Naive thymus-derived CD4-positive, alpha-beta T cell (primary cell): ENCODE measurements at regions of chr6 and their contacts with region 1.

Region 1: DNA sequence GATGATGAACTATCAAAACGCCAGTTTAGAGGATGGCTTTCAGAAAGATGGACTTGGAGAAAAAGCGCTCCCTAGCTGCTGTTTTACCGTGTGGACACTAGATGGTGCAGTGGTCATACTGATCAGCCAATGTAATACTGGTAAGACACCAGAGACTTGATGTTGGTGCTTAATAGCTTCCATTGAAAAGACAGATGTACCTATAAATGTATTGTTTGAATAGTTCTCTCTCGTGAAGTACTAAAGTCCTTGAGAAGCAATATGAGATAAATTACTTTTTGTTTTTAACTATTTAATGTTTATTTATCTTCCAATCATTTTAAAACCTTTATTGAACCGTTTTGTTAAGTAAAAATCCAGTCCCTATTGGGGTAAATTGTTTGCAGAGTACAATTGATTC is 63.9 kb upstream of the FUCA2 start:
- DNase-seq: peak in 8 of 9 donors; percentile 34 to 79 (median 67)
- ATAC-seq: peak; percentile 99
- H3K4me3 ChIP-seq: no peak overlapping the region
- H3K4me3 Mint-ChIP-seq: no peak overlapping the region
- H3K27ac ChIP-seq: no peak overlapping the region
- H3K27ac Mint-ChIP-seq: peak overlapping the region in 1 of 9 donors; percentile 15
- H3K4me1 ChIP-seq: no peaks in the 10 kb centered on the region
- H3K4me1 Mint-ChIP-seq: peaks cover 0 to 9% (median 0%) of the 10 kb centered on the region in 7 donors
- H3K27me3 ChIP-seq: no peaks in the 10 kb centered on the region
- H3K27me3 Mint-ChIP-seq: no peaks in the 10 kb centered on the region

Region 2: GRCh38 chr6:143510991-143511891 is 64.2 kb before region 1 on chr6 and contains the start of gene FUCA2:
- CTCF ChIA-PET with region 1: interaction called, 6 read pairs
- POLR2A ChIA-PET with region 1: no interaction called
- intact Hi-C with region 1: loop called in 1 of 2 experiments (anchors 1 kb)
- DNase-seq: peak; percentile 35 to 72 (median 63)
- ATAC-seq: peak; percentile 82
- H3K4me3 ChIP-seq: peak within 1 kb of the TSS; percentile 74
- H3K4me3 Mint-ChIP-seq: peak within 1 kb of the TSS; percentile 87 to 97 (median 92)
- H3K27ac ChIP-seq: peak within 1 kb of the TSS; percentile 69
- H3K27ac Mint-ChIP-seq: peak within 1 kb of the TSS; percentile 79 to 97 (median 89)
- H3K4me1 ChIP-seq: peaks cover 0 to 4% of the 10 kb centered on the region in 2 donors
- H3K4me1 Mint-ChIP-seq: peaks cover 14 to 43% (median 19%) of the 10 kb centered on the region in 7 donors
- H3K27me3 ChIP-seq: no peaks in the 10 kb centered on the region
- H3K27me3 Mint-ChIP-seq: no peaks in the 10 kb centered on the region
- total RNA-seq, gene FUCA2: 5.3 to 14.9 (median 6.7) TPM

Region 3: GRCh38 chr6:143734641-143735063 is 159.2 kb after region 1 on chr6:
- CTCF ChIA-PET with region 1: no interaction called
- POLR2A ChIA-PET with region 1: no interaction called
- intact Hi-C with region 1: loop called in 1 of 2 experiments (anchors 5 kb)
- DNase-seq: no peak
- ATAC-seq: no peak
- H3K4me3 ChIP-seq: no peak overlapping the region
- H3K4me3 Mint-ChIP-seq: no peak overlapping the region
- H3K27ac ChIP-seq: no peak overlapping the region
- H3K27ac Mint-ChIP-seq: no peak overlapping the region
- H3K4me1 ChIP-seq: peaks cover 0 to 8% of the 10 kb centered on the region in 2 donors
- H3K4me1 Mint-ChIP-seq: peaks cover 16 to 44% (median 30%) of the 10 kb centered on the region in 7 donors
- H3K27me3 ChIP-seq: no peaks in the 10 kb centered on the region
- H3K27me3 Mint-ChIP-seq: no peaks in the 10 kb centered on the region

Region 4: DNA sequence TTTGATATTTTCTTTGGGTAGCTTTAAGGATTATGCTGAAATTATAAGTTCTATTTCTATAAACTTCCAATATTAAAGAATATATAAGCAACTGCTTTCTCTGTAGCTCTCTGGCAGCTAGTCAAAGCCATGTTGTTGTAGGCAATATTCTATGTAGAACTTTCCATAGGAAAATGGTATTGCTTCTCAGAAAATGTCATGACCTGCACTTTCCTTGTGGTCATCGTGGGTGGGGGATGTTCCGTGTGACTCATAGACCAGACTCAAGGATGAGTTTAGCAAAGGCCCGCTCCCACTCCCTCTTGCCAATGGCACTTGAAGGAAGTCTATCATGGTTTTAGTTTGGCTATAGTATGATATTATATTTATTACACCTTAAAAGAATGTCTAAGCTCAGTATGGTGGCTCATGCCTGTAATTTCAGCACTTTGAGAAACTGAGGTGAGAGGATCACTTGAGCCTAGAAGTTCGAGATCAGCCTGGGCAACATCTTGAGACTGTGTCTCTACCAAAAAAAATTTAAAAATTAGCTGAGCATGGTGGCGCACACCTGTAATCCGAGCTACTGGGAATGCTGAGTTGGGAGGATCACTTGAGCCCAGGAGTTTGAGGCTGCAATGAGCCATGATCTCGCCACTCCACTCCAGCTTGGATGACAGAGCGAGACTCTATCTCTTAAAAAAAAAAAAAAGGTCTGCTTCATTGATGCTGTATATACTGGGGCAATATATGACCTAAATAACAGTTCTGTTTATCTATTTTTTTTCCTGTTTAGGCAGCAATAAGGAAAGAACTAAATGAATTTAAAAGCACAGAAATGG is 231.1 kb after region 1 on chr6:
- CTCF ChIA-PET with region 1: no interaction called
- POLR2A ChIA-PET with region 1: no interaction called
- intact Hi-C with region 1: no loop called
- DNase-seq: peak in 1 of 9 donors; percentile 84
- ATAC-seq: peak; percentile 48
- H3K4me3 ChIP-seq: no peak overlapping the region
- H3K4me3 Mint-ChIP-seq: peak overlapping the region in 1 of 10 donors; percentile 25
- H3K27ac ChIP-seq: no peak overlapping the region
- H3K27ac Mint-ChIP-seq: peak overlapping the region in 1 of 9 donors; percentile 62
- H3K4me1 ChIP-seq: no peaks in the 10 kb centered on the region
- H3K4me1 Mint-ChIP-seq: peaks cover 0 to 33% (median 4%) of the 10 kb centered on the region in 7 donors
- H3K27me3 ChIP-seq: no peaks in the 10 kb centered on the region
- H3K27me3 Mint-ChIP-seq: no peaks in the 10 kb centered on the region

Region 5: DNA sequence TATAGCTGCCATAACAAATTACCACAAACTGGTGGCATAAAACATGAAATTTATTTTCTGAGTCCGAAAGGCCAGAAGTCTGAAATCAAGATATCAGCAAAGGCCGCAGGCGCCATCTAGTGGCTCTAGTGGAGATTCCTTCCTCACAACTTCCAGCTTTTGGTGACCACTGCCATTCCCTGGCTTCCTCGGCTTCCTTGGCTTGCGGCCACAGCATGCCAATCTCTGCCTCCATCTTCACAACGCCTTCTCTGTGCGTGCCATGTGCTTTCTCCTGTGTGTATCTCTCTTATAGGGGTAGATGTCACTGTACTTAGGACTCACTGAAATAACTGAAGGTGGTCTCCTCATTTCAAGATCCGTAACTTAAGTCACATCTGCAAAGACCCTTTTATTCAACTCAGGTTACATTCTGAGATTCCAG is 438.1 kb after region 1 on chr6:
- CTCF ChIA-PET with region 1: interaction called, 24 read pairs
- POLR2A ChIA-PET with region 1: interaction called, 7 read pairs
- intact Hi-C with region 1: loop called (anchors 1 kb)
- DNase-seq: peak; percentile 18 to 58 (median 45)
- ATAC-seq: peak; percentile 54
- H3K4me3 ChIP-seq: no peak overlapping the region
- H3K4me3 Mint-ChIP-seq: no peak overlapping the region
- H3K27ac ChIP-seq: no peak overlapping the region
- H3K27ac Mint-ChIP-seq: peak overlapping the region in 1 of 9 donors; percentile 9
- H3K4me1 ChIP-seq: no peaks in the 10 kb centered on the region
- H3K4me1 Mint-ChIP-seq: peaks cover 0 to 4% (median 0%) of the 10 kb centered on the region in 7 donors
- H3K27me3 ChIP-seq: peaks cover 0 to 6% of the 10 kb centered on the region in 2 donors
- H3K27me3 Mint-ChIP-seq: peaks cover 11 to 45% (median 28%) of the 10 kb centered on the region in 5 donors

Region 6: GRCh38 chr6:144104898-144105487 is 529.6 kb after region 1 on chr6:
- CTCF ChIA-PET with region 1: interaction called, 3 read pairs
- POLR2A ChIA-PET with region 1: no interaction called
- intact Hi-C with region 1: loop called in 1 of 2 experiments (anchors 1 kb)
- DNase-seq: peak in 7 of 9 donors; percentile 30 to 67 (median 61)
- ATAC-seq: peak; percentile 88
- H3K4me3 ChIP-seq: no peak overlapping the region
- H3K4me3 Mint-ChIP-seq: no peak overlapping the region
- H3K27ac ChIP-seq: no peak overlapping the region
- H3K27ac Mint-ChIP-seq: peak overlapping the region in 1 of 9 donors; percentile 29
- H3K4me1 ChIP-seq: no peaks in the 10 kb centered on the region
- H3K4me1 Mint-ChIP-seq: peaks cover 0 to 7% (median 4%) of the 10 kb centered on the region in 7 donors
- H3K27me3 ChIP-seq: no peaks in the 10 kb centered on the region
- H3K27me3 Mint-ChIP-seq: peaks cover 0 to 6% (median 0%) of the 10 kb centered on the region in 5 donors

Region 7: GRCh38 chr6:144931172-144932035 is 1356.0 kb after region 1 on chr6:
- CTCF ChIA-PET with region 1: no interaction called
- POLR2A ChIA-PET with region 1: no interaction called
- intact Hi-C with region 1: loop called in 1 of 2 experiments (anchors 1 kb)
- DNase-seq: peak in 5 of 9 donors; percentile 4 to 31 (median 11)
- ATAC-seq: peak; percentile 47
- H3K4me3 ChIP-seq: no peak overlapping the region
- H3K4me3 Mint-ChIP-seq: no peak overlapping the region
- H3K27ac ChIP-seq: no peak overlapping the region
- H3K27ac Mint-ChIP-seq: no peak overlapping the region
- H3K4me1 ChIP-seq: no peaks in the 10 kb centered on the region
- H3K4me1 Mint-ChIP-seq: peaks cover 0 to 3% (median 0%) of the 10 kb centered on the region in 7 donors
- H3K27me3 ChIP-seq: no peaks in the 10 kb centered on the region
- H3K27me3 Mint-ChIP-seq: peaks cover 0 to 15% (median 0%) of the 10 kb centered on the region in 5 donors